ENCODE measurements at regions of chr3 and their contacts with region 1.

Region 1: GRCh38 chr3:126389112-126389793 is 5.5 kb upstream of the CFAP100 start:
- DNase-seq: peak; percentile 91 to 93
- H3K4me3 ChIP-seq: peak overlapping the region; percentile 40
- H3K4me3 Mint-ChIP-seq: peak overlapping the region; percentile 84
- H3K27ac Mint-ChIP-seq: peak overlapping the region; percentile 90
- H3K4me1 ChIP-seq: no peaks in the 10 kb centered on the region
- H3K4me1 Mint-ChIP-seq: peaks cover 6% of the 10 kb centered on the region
- H3K27me3 ChIP-seq: no peaks in the 10 kb centered on the region
- H3K27me3 Mint-ChIP-seq: peaks cover 9% of the 10 kb centered on the region
- CTCF ChIP-seq: peak; percentile 92 to 93

Region 2: GRCh38 chr3:126134219-126134975 is 254.9 kb before region 1 on chr3:
- CTCF ChIA-PET with region 1: interaction called, 11 read pairs
- POLR2A ChIA-PET with region 1: no interaction called
- intact Hi-C with region 1: loop called (anchors 1 kb)
- DNase-seq: peak; percentile 56 to 72
- H3K4me3 ChIP-seq: no peak overlapping the region
- H3K4me3 Mint-ChIP-seq: no peak overlapping the region
- H3K27ac Mint-ChIP-seq: no peak overlapping the region
- H3K4me1 ChIP-seq: no peaks in the 10 kb centered on the region
- H3K4me1 Mint-ChIP-seq: no peaks in the 10 kb centered on the region
- H3K27me3 ChIP-seq: no peaks in the 10 kb centered on the region
- H3K27me3 Mint-ChIP-seq: peaks cover 6% of the 10 kb centered on the region
- CTCF ChIP-seq: peak; percentile 67

Region 3: GRCh38 chr3:126245811-126246727 is 143.2 kb before region 1 on chr3:
- CTCF ChIA-PET with region 1: interaction called, 3 read pairs
- POLR2A ChIA-PET with region 1: no interaction called
- intact Hi-C with region 1: loop called (anchors 1 kb)
- DNase-seq: peak in 1 of 2 experiments; percentile 42
- H3K4me3 ChIP-seq: no peak overlapping the region
- H3K4me3 Mint-ChIP-seq: no peak overlapping the region
- H3K27ac Mint-ChIP-seq: no peak overlapping the region
- H3K4me1 ChIP-seq: no peaks in the 10 kb centered on the region
- H3K4me1 Mint-ChIP-seq: no peaks in the 10 kb centered on the region
- H3K27me3 ChIP-seq: no peaks in the 10 kb centered on the region
- H3K27me3 Mint-ChIP-seq: peaks cover 17% of the 10 kb centered on the region
- CTCF ChIP-seq: peak; percentile 29 to 33

Region 4: GRCh38 chr3:126357295-126358037 is 31.8 kb before region 1 on chr3 and contains the start of gene KLF15:
- CTCF ChIA-PET with region 1: interaction called, 3 read pairs
- POLR2A ChIA-PET with region 1: no interaction called
- intact Hi-C with region 1: loop called (anchors 1 kb)
- DNase-seq: peak; percentile 77 to 86
- H3K4me3 ChIP-seq: peak within 1 kb of the TSS; percentile 66
- H3K4me3 Mint-ChIP-seq: peak within 1 kb of the TSS; percentile 80
- H3K27ac Mint-ChIP-seq: peak within 1 kb of the TSS; percentile 40
- H3K4me1 ChIP-seq: peaks cover 4% of the 10 kb centered on the region; the same call in 1 of the 2 replicates
- H3K4me1 Mint-ChIP-seq: peaks cover 7% of the 10 kb centered on the region
- H3K27me3 ChIP-seq: no peaks in the 10 kb centered on the region; the same call in 1 of the 2 replicates
- H3K27me3 Mint-ChIP-seq: peaks cover 18% of the 10 kb centered on the region
- CTCF ChIP-seq: no peak
- total RNA-seq, gene KLF15: 2.7 and 3.9 TPM in 2 replicates

Measured in Caco-2 (cell line).